Naive thymus-derived CD8-positive, alpha-beta T cell (primary cell): ENCODE measurements at regions of chr22 and their contacts with region 1.

Region 1: DNA sequence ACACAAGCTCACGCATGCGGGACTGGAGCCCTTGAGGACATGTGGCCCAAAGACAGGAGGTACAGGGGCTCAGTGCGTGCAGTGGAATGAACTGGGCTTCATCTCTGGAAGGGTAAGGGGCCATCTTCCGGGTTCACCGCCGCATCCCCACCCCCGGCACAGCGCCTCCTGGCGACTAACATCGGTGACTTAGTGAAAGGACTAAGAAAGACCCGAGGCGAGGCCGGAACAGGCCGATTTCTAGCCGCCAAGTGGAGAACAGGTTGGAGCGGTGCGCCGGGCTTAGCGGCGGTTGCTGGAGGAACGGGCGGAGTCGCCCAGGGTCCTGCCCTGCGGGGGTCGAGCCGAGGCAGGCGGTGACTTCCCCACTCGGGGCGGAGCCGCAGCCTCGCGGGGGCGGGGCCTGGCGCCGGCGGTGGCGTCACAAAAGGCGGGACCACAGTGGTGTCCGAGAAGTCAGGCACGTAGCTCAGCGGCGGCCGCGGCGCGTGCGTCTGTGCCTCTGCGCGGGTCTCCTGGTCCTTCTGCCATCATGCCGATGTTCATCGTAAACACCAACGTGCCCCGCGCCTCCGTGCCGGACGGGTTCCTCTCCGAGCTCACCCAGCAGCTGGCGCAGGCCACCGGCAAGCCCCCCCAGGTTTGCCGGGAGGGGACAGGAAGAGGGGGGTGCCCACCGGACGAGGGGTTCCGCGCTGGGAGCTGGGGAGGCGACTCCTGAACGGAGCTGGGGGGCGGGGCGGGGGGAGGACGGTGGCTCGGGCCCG is at the start of gene MIF:
- DNase-seq: peak; percentile 87 to 99 (median 95)
- ATAC-seq: peak; percentile 84 to 85
- H3K4me3 Mint-ChIP-seq: peak within 1 kb of the TSS; percentile 84 to 96 (median 93)
- H3K27ac Mint-ChIP-seq: peak within 1 kb of the TSS; percentile 91 to 99 (median 97)
- H3K4me1 Mint-ChIP-seq: peaks cover 18 to 37% (median 28%) of the 10 kb centered on the region in 4 donors
- H3K27me3 Mint-ChIP-seq: no peaks in the 10 kb centered on the region
- polyA plus RNA-seq, gene MIF: 1,088 to 1,264 (median 1,247) TPM

Region 2: DNA sequence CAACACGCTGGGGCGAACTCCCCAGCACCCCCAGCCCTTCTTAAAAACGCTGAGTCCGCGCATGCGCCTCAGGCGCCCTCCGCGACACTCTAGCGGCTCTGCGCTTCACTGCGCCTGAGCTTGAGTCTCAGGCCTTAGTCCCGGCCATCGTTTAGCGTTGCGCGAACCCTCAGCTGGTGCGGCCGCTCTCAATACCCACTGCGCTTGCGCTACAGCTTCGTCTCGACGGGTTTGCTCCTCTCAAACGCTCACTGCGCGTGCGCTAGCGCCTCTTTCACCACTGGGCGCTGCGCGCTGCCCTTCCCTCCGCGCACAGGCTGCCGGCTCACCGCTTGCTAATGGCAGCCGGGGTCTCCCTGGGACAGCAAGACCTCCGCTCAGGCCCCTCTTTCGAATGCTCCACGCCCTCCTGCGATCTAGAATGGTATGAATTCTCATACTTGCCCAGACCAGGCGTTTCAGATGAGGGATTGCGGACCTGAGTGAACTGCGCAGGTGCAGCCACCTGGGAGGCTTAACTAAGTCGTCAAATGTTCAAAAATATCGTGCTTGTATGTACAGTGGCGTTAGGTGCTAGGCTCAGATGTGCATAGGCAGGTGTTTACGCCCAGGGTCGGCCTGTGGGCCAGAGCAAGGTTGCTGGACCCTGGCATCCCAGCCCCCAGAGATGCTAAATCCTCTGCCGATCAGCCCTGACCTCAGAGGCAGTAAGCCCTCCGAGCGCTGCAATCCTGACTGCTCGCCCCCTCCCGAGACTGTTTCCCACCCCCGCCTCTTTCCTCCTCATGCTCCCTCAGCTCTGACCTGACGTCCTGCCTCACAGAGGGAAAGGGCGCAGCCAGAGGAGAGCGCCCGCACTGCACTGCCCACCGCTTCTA is 36.3 kb before region 1 on chr22 and contains the start of gene SLC2A11:
- POLR2A ChIA-PET with region 1: interaction called, 52 read pairs
- DNase-seq: peak; percentile 85 to 97 (median 90)
- ATAC-seq: peak; percentile 93 to 94
- H3K4me3 Mint-ChIP-seq: peak within 1 kb of the TSS; percentile 93 to 98 (median 96)
- H3K27ac Mint-ChIP-seq: peak within 1 kb of the TSS; percentile 81 to 96 (median 90)
- H3K4me1 Mint-ChIP-seq: peaks cover 13 to 22% (median 20%) of the 10 kb centered on the region in 4 donors
- H3K27me3 Mint-ChIP-seq: no peaks in the 10 kb centered on the region
- polyA plus RNA-seq, gene SLC2A11: 3.6 to 8.5 (median 6.3) TPM

Region 3: GRCh38 chr22:23913661-23914353 is 19.7 kb after region 1 on chr22:
- POLR2A ChIA-PET with region 1: interaction called, 39 read pairs
- DNase-seq: peak; percentile 93 to 99 (median 98)
- ATAC-seq: peak; percentile 98 to 99
- H3K4me3 Mint-ChIP-seq: peak overlapping the region; percentile 83 to 99 (median 96)
- H3K27ac Mint-ChIP-seq: peak overlapping the region; percentile 93 to 99 (median 98)
- H3K4me1 Mint-ChIP-seq: peaks cover 7 to 19% (median 13%) of the 10 kb centered on the region in 4 donors
- H3K27me3 Mint-ChIP-seq: no peaks in the 10 kb centered on the region